AG04449 (cell line): ENCODE measurements at regions of chr5 and their contacts with region 1.

Region 1: GRCh38 chr5:442335-443238 is at the start of gene EXOC3:
- DNase-seq: no peak
- H3K4me3 ChIP-seq: peak within 1 kb of the TSS; percentile 99
- CTCF ChIP-seq: no peak

Region 2: DNA sequence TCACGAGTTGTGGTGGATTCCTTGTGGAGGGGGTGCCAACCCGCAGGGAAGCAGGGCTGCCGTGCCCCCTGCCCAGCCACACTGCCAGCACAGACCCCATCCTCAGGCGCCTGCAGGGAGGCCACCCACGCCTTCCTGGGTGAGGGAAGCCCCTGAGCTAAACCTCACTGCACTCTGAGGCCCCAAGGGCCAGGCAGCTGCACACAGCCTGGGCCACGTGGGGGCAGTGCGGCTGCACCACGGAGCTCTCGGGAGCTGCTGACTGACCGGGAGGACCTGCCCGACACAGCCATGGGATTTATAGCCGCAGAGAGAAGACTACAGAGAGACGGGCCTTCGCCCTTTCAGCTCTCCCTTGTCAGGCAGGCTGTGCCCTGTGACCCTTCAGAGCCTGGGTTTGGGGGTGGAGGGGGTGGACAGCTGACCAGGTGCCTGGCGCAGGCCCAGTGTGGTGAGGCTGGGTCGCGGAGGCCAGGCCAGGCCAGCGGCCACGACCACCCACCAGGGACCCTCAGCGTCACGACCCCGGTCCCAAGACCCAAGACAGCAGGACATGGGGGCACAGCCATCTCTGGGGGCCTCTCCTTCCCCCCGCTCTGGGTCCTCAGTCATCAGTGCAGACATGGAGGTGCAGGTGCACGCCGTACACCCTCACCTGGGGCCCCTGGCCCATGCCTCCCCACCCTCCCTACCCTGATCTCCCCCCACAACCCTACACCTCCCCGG is 125.3 kb before region 1 on chr5:
- CTCF ChIA-PET with region 1: interaction called, 45 read pairs
- POLR2A ChIA-PET with region 1: no interaction called
- DNase-seq: no peak
- H3K4me3 ChIP-seq: no peak overlapping the region
- CTCF ChIP-seq: peak; percentile 98

Region 3: DNA sequence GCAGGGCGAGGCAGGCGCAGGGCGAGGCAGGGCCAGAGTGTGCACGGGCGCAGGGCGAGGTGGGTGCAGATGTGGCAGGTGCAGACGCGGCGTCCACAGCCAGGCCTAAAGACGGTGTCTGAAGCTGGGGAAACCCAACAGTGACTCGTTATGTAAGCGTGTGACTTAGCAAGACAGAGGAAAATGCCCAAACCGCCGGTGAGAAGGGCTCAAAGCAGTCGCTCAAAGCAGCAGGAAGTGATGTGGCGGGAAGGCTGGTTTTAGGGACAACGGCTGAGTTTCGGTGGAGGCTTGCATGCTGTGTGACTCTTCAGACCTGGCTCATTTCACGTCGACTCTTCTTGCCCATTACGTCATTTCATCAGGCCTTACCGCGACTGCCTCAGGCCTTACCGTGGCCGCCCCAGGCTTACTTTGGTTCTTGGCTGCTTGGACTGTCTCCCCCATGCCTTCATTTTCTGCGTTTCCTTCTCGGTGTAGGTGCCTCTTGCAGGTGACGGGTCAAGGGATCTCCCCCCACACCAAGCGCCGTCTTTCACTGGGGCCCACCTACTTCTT is 50.1 kb before region 1 on chr5:
- CTCF ChIA-PET with region 1: no interaction called
- POLR2A ChIA-PET with region 1: no interaction called
- DNase-seq: no peak
- H3K4me3 ChIP-seq: no peak overlapping the region
- CTCF ChIP-seq: no peak

Region 4: GRCh38 chr5:431001-431710 is 11.4 kb before region 1 on chr5:
- CTCF ChIA-PET with region 1: interaction called, 37 read pairs
- POLR2A ChIA-PET with region 1: no interaction called
- DNase-seq: no peak
- H3K4me3 ChIP-seq: no peak overlapping the region
- CTCF ChIP-seq: peak; percentile 91

Region 5: GRCh38 chr5:464843-465590 is 22.4 kb after region 1 on chr5:
- CTCF ChIA-PET with region 1: interaction called, 10 read pairs
- POLR2A ChIA-PET with region 1: no interaction called
- DNase-seq: no peak
- H3K4me3 ChIP-seq: no peak overlapping the region
- CTCF ChIP-seq: no peak

Region 6: DNA sequence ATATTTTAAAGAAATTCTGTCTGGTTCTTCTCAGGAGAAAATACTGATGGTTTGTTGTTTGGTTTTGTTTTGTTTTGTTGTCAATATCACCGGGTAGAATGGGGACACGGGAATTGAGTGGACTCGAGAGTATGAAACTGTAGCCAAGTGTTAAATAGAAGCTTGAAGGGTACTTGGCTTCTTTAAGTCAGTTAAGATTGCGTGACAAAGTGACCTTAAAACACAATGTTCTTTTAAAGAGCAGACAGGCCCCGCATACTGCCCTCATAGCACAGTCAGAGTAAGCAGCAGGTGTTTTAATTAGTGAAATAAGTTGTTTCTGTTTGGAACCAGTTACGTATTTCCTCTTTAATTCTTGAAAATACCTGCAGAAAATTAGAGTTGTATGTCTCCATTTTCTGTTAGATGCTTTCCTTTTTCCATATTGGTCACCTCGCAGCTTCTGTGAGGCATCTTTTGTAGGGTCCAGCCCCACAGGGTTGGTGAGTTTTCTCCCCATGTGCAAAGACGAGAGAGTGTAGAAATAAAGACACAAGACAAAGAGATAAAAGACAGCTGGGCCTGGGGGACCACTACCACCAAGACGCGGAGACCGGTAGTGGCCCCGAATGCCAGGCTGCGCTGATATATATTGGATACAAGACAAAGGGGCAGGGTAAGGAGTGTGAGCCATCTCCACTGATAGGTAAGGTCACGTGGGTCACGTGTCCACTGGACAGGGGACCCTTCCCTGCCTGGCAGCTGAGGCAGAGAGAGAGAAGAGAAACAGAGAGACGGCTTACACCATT is 459.7 kb after region 1 on chr5:
- CTCF ChIA-PET with region 1: interaction called, 19 read pairs
- POLR2A ChIA-PET with region 1: no interaction called
- DNase-seq: no peak
- H3K4me3 ChIP-seq: no peak overlapping the region
- CTCF ChIP-seq: no peak